ENCODE measurements at regions of chr13 and their contacts with region 1.

Region 1: GRCh38 chr13:51425410-51426042 is 27.3 kb downstream of the INTS6 start:
- DNase-seq: no peak
- ATAC-seq: no peak
- H3K4me3 ChIP-seq: no peak overlapping the region
- H3K4me3 Mint-ChIP-seq: no peak overlapping the region
- H3K27ac ChIP-seq: no peak overlapping the region
- H3K27ac Mint-ChIP-seq: no peak overlapping the region
- H3K4me1 ChIP-seq: peaks cover 53% of the 10 kb centered on the region
- H3K4me1 Mint-ChIP-seq: peaks cover 81% of the 10 kb centered on the region
- H3K27me3 ChIP-seq: no peaks in the 10 kb centered on the region
- H3K27me3 Mint-ChIP-seq: no peaks in the 10 kb centered on the region
- CTCF ChIP-seq: no peak

Region 2: GRCh38 chr13:50521831-50522149 is 903.7 kb before region 1 on chr13:
- CTCF ChIA-PET with region 1: no interaction called
- POLR2A ChIA-PET with region 1: no interaction called
- intact Hi-C with region 1: no loop called
- DNase-seq: no peak
- ATAC-seq: no peak
- H3K4me3 ChIP-seq: no peak overlapping the region
- H3K4me3 Mint-ChIP-seq: no peak overlapping the region
- H3K27ac ChIP-seq: no peak overlapping the region
- H3K27ac Mint-ChIP-seq: no peak overlapping the region
- H3K4me1 ChIP-seq: no peaks in the 10 kb centered on the region
- H3K4me1 Mint-ChIP-seq: peaks cover 15% of the 10 kb centered on the region
- H3K27me3 ChIP-seq: no peaks in the 10 kb centered on the region
- H3K27me3 Mint-ChIP-seq: peaks cover 3% of the 10 kb centered on the region
- CTCF ChIP-seq: no peak

Region 3: GRCh38 chr13:51412431-51412830 is 13.1 kb before region 1 on chr13:
- CTCF ChIA-PET with region 1: no interaction called
- POLR2A ChIA-PET with region 1: interaction called, 3 read pairs
- intact Hi-C with region 1: loop called in 1 of 2 experiments (anchors 2 kb)
- DNase-seq: no peak
- ATAC-seq: no peak
- H3K4me3 ChIP-seq: no peak overlapping the region
- H3K4me3 Mint-ChIP-seq: no peak overlapping the region
- H3K27ac ChIP-seq: no peak overlapping the region
- H3K27ac Mint-ChIP-seq: peak overlapping the region; percentile 29
- H3K4me1 ChIP-seq: no peaks in the 10 kb centered on the region
- H3K4me1 Mint-ChIP-seq: peaks cover 60% of the 10 kb centered on the region
- H3K27me3 ChIP-seq: no peaks in the 10 kb centered on the region
- H3K27me3 Mint-ChIP-seq: no peaks in the 10 kb centered on the region
- CTCF ChIP-seq: no peak

Region 4: DNA sequence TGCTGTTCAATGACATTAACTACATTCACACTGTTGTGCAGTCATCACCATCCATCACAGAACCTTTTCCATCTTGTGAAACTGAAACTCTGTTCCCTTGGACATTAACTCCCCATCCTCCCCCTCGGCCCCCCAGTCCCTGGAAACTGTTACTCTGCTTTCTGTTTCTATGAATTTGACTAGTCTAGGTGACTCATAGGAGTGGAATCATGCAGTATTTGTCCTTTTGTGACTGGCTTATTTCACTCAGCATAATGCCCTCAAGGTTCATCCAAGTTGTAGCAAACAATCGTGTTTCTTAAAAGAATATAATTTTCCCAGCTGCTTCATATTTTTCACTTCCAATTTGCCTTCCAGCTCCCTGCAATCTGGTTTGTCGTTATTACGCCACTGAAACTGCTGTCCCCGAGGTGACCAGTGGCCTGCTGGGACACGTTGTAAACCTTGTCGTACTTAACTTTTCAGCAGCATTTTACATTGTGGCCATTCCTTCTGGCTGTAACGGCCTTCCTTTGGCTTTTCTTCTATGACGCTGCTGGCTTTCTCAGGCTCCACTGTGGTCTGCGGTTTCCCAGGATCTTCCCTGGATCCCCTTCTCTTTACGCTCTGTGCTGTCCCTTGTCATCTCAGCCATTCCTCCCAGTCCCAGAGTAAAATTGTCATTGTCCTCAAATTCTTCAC is 304.5 kb after region 1 on chr13:
- CTCF ChIA-PET with region 1: no interaction called
- POLR2A ChIA-PET with region 1: no interaction called
- intact Hi-C with region 1: loop called in 1 of 2 experiments (anchors 10 kb)
- DNase-seq: no peak
- ATAC-seq: no peak
- H3K4me3 ChIP-seq: no peak overlapping the region
- H3K4me3 Mint-ChIP-seq: no peak overlapping the region
- H3K27ac ChIP-seq: no peak overlapping the region
- H3K27ac Mint-ChIP-seq: no peak overlapping the region
- H3K4me1 ChIP-seq: no peaks in the 10 kb centered on the region
- H3K4me1 Mint-ChIP-seq: peaks cover 5% of the 10 kb centered on the region
- H3K27me3 ChIP-seq: no peaks in the 10 kb centered on the region
- H3K27me3 Mint-ChIP-seq: no peaks in the 10 kb centered on the region
- CTCF ChIP-seq: no peak